ENCODE measurements at regions of chr18 and their contacts with region 1.

Region 1: DNA sequence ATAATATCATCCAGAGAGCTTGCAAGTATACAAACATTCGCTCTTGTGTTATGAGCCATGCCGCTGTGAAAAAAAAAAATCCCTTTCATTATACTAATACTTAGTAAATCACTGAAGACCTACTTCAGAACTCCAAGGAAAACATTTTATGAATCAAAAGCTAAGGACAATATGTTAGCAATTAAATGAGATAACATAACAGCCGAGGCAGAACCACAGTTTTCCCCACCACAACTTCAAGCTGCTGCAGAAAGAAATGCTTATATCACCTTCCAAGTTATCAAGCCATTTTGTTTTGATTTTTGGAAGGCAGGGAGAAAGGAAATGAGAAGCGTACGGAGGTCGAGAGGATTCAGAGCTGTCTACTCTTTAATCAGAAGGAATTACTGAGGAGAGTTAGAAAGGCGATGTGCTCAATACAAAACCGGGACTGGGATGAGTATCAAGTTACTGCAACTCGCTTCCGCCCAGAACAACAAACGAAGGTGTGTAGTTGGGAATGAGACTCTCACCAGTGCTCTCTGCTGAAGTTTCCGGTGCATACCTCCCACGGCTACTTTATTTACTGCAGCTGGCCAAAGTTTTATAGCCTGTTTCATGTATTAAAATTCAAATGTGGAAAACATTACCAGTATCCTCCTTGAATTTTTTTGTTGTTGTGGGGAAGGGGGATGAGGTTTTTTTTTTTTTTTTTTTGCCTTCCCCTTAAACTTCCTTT is 292.2 kb upstream of the CCDC68 start:
- DNase-seq: peak; percentile 82
- ATAC-seq: peak; percentile 87
- H3K4me3 ChIP-seq: peak overlapping the region; percentile 56
- H3K27ac ChIP-seq: peak overlapping the region; percentile 86
- H3K4me1 ChIP-seq: peaks cover 47% of the 10 kb centered on the region
- H3K27me3 ChIP-seq: no peaks in the 10 kb centered on the region
- CTCF ChIP-seq: no peak

Region 2: DNA sequence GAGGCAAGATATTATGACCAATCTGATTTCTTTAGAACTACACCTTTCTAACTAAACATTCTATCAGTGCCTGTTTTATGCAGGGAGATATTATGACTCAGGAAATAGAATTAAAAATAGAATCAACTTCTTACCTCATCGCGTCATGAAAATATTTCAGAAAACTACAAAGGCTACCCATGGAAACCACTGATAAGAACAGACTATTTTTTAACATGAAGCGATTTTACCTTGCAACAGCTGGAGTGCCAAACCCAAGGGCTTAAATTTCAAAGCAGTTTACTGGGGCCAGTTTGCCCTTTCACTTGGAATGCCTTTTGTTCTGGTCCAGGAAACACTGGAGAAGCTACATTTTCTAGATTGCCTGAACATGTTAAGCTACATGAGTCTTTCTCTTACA is 12.7 kb after region 1 on chr18:
- CTCF ChIA-PET with region 1: no interaction called
- POLR2A ChIA-PET with region 1: no interaction called
- intact Hi-C with region 1: no loop called
- DNase-seq: no peak
- ATAC-seq: no peak
- H3K4me3 ChIP-seq: no peak overlapping the region
- H3K27ac ChIP-seq: no peak overlapping the region
- H3K4me1 ChIP-seq: peaks cover 21% of the 10 kb centered on the region
- H3K27me3 ChIP-seq: no peaks in the 10 kb centered on the region
- CTCF ChIP-seq: no peak

Region 3: GRCh38 chr18:55275039-55275901 is 23.9 kb after region 1 on chr18:
- CTCF ChIA-PET with region 1: no interaction called
- POLR2A ChIA-PET with region 1: interaction called, 3 read pairs
- intact Hi-C with region 1: loop called (anchors 2 kb)
- DNase-seq: peak; percentile 76
- ATAC-seq: peak; percentile 95
- H3K4me3 ChIP-seq: no peak overlapping the region
- H3K27ac ChIP-seq: no peak overlapping the region
- H3K4me1 ChIP-seq: peaks cover 8% of the 10 kb centered on the region
- H3K27me3 ChIP-seq: no peaks in the 10 kb centered on the region
- CTCF ChIP-seq: peak; percentile 61